ENCODE measurements at regions of chr19 and their contacts with region 1.

Region 1: DNA sequence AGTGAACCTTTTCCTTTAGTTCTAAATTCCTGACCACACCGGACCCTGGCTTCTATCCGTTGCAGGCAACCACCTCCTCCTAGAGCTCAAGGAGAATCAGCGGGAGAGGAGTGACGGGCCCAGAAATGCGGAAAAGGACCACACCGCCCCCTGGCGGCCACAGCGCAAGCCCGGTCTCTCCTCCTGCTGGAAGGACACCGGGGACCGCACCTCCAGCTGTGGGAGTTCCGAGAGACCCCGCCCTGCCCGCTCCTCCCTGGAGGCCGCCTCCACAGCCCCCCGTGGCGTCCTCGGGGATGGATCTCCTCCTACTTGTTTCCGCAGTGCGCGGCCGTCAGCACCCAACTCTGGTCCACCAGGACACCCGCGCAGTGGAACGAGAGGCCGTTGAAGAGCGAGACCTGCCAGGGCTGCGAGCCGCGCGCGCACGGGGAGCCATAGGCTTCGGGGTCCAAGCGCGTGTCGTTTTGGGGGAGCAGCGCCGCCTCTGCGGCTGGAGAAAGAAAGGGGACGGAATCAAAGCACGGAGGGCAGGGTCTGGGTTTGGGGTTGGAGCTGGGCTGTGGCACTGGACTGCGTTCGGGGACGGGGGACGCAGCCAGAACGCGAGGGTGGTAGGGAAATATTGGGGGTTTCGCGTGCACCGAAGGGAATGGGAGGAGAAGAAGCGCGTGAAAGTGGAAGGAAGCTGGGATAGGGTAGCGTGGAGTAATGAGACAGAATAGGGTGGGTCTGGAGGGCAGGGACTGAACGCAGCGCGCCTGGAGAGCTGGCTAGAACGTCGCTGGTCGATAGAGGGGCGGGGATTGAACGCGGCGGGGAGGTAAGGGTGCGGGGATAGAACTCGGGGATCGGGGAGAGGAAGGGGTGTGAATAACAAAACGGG is 2.5 kb downstream of the KLK10 start:
- DNase-seq: peak in 5 of 7 donors; percentile 32 to 75 (median 47)
- H3K4me3 ChIP-seq: peak overlapping the region in 1 of 4 donors; percentile 4
- H3K27ac ChIP-seq: no peak overlapping the region
- H3K4me1 ChIP-seq: peaks cover 0 to 8% of the 10 kb centered on the region in 2 donors
- H3K27me3 ChIP-seq: peaks cover 42% of the 10 kb centered on the region
- CTCF ChIP-seq: peak in 4 of 6 experiments; percentile 28 to 70 (median 52)
- POLR2A ChIP-seq: no peak

Region 2: GRCh38 chr19:50969411-50969756 is 47.7 kb before region 1 on chr19 and contains the start of gene KLK6:
- intact Hi-C with region 1: no loop called
- DNase-seq: no peak
- H3K4me3 ChIP-seq: no peak within 1 kb of the TSS
- H3K27ac ChIP-seq: no peak within 1 kb of the TSS
- H3K4me1 ChIP-seq: no peaks in the 10 kb centered on the region
- H3K27me3 ChIP-seq: peaks cover 6% of the 10 kb centered on the region
- CTCF ChIP-seq: no peak
- POLR2A ChIP-seq: no peak
- total RNA-seq, gene KLK6: not detected

Region 3: DNA sequence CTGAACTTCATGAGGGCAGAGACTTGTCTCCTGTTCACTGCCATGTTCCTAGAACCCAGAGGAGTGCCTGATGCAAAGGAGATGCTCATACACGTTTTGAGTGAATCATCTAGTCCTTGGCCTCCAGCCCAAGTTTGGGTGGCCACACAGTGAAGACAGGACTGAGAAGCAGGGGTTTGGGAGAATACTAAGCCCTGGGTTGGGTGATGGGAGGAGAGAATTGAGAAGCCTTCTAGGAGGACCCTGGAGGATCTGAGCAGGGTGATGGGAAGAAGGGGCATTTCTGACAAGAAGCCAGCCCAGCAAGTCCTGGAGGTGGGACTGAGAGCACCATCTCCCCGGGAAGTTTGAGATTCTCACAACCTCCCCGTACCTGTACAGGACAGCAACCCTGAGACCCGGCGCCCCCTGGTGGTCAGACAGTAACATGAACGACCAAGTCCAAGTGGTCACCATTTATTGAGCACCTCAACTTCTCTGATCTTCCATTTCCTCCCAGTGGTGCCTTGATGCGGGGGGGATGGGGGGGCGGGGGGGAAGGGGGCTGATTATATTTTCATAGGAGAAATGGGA is 80.2 kb after region 1 on chr19:
- intact Hi-C with region 1: loop called (anchors 2 to 10 kb)
- DNase-seq: peak; percentile 56 to 78 (median 66)
- H3K4me3 ChIP-seq: no peak overlapping the region
- H3K27ac ChIP-seq: no peak overlapping the region
- H3K4me1 ChIP-seq: peaks cover 0 to 10% of the 10 kb centered on the region in 2 donors
- H3K27me3 ChIP-seq: no peaks in the 10 kb centered on the region
- CTCF ChIP-seq: peak; percentile 41 to 65 (median 54)
- POLR2A ChIP-seq: no peak

Region 4: DNA sequence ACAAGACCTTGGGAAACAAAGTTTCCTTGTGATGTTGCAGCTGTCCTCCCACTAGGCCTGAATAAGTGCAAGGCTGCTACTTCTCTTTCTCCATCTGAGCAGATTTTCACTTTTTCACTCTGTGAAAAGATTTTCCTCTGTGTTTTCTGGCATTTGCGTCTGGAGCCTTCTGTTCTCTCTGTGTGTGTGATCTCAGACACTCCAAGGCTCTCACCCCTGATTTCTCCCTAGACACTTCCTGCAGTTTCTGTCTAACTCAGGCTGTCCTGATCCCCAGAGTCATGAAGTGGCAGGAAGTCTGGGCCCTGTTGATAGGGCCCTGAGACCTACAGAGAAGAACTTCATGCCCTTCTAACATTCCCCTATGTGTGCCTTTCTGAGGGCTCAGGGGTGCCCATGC is 162.2 kb after region 1 on chr19:
- intact Hi-C with region 1: loop called in 1 of 2 experiments (anchors 10 kb)
- DNase-seq: no peak
- H3K4me3 ChIP-seq: no peak overlapping the region
- H3K27ac ChIP-seq: no peak overlapping the region
- H3K4me1 ChIP-seq: no peaks in the 10 kb centered on the region
- H3K27me3 ChIP-seq: peaks cover 8% of the 10 kb centered on the region
- CTCF ChIP-seq: no peak
- POLR2A ChIP-seq: no peak